Activated naive CD4-positive, alpha-beta T cell treated with anti-CD3 and anti-CD28 coated beads for 36 hours (primary cell): ENCODE measurements at regions of chr12 and their contacts with region 1.

Region 1: DNA sequence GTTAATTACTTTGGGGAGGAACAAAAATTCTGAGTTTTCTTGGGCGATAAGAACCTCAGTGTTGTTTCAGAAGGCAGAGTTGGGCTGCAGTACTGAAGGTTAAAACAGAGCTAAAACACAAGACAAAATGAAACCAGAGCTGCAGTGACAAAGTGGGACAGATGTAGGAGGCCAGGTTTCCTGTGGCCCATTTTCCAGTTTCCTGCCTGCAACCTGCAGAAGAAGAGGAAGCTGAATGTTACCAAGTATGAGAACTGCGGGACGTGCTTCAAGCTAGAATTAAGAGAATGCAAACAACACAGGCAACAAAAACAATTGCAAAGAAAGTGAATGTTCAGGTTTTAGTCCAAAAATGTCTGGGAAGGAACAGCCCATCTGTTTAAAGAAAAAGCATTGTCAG is 17.8 kb downstream of the ELK3 start:
- DNase-seq: peak; percentile 33
- H3K4me3 Mint-ChIP-seq: peak overlapping the region; percentile 61
- H3K27ac Mint-ChIP-seq: peak overlapping the region; percentile 84
- H3K4me1 Mint-ChIP-seq: peaks cover 85% of the 10 kb centered on the region
- H3K27me3 Mint-ChIP-seq: no peaks in the 10 kb centered on the region

Region 2: DNA sequence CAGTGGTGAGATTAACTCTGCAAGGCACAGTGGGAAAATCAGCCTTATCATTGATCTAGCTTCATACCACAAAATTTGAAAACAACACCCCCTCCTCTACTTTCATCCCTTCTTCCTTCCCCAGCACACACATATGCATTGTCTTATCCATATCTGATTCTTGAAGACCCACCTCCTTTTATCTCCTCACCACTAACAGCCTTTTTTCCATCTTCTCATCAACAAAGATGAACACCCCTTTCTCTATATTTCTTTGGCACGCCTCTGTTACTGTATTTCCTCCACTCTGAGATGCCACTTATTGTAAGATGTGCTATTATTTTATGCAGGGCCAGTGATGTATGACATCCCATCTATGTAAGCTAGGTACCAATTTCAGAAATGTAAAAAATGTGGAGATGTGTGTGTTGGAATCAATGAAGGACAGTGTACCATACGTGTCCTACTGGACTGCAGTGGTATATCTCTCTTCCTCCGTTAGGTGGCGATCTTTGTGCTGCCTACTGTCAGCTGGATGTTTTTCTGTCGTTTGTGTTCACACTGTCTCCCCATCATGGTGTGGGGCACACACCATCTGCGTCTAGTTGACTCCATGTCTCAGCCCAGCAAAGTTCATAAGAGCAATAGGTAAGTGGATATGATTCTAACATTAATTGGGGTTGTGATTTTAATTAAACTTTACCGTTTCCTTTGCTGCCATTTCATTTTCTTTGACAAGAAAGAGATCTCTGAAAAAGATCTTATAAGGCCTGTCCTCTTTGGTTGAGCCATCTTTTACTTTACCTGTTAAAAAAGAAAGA is 293.6 kb before region 1 on chr12:
- CTCF ChIA-PET with region 1: interaction called, 3 read pairs
- intact Hi-C with region 1: loop called (anchors 2 kb)
- DNase-seq: peak; percentile 65
- H3K4me3 Mint-ChIP-seq: no peak overlapping the region
- H3K27ac Mint-ChIP-seq: no peak overlapping the region
- H3K4me1 Mint-ChIP-seq: no peaks in the 10 kb centered on the region
- H3K27me3 Mint-ChIP-seq: peaks cover 2% of the 10 kb centered on the region

Region 3: GRCh38 chr12:95998611-95999286 is 213.2 kb before region 1 on chr12:
- CTCF ChIA-PET with region 1: no interaction called
- intact Hi-C with region 1: loop called (anchors 1 kb)
- DNase-seq: peak; percentile 71
- H3K4me3 Mint-ChIP-seq: no peak overlapping the region
- H3K27ac Mint-ChIP-seq: no peak overlapping the region
- H3K4me1 Mint-ChIP-seq: peaks cover 3% of the 10 kb centered on the region
- H3K27me3 Mint-ChIP-seq: no peaks in the 10 kb centered on the region

Region 4: GRCh38 chr12:96061864-96062453 is 150.0 kb before region 1 on chr12:
- CTCF ChIA-PET with region 1: interaction called, 79 read pairs
- intact Hi-C with region 1: loop called (anchors 1 kb)
- DNase-seq: peak; percentile 90
- H3K4me3 Mint-ChIP-seq: no peak overlapping the region
- H3K27ac Mint-ChIP-seq: no peak overlapping the region
- H3K4me1 Mint-ChIP-seq: peaks cover 25% of the 10 kb centered on the region
- H3K27me3 Mint-ChIP-seq: no peaks in the 10 kb centered on the region

Region 5: GRCh38 chr12:96177013-96177412 is 35.0 kb before region 1 on chr12:
- CTCF ChIA-PET with region 1: interaction called, 21 read pairs
- intact Hi-C with region 1: loop called (anchors 1 kb)
- DNase-seq: peak; percentile 91
- H3K4me3 Mint-ChIP-seq: no peak overlapping the region
- H3K27ac Mint-ChIP-seq: peak overlapping the region; percentile 82
- H3K4me1 Mint-ChIP-seq: peaks cover 17% of the 10 kb centered on the region
- H3K27me3 Mint-ChIP-seq: no peaks in the 10 kb centered on the region

Region 6: DNA sequence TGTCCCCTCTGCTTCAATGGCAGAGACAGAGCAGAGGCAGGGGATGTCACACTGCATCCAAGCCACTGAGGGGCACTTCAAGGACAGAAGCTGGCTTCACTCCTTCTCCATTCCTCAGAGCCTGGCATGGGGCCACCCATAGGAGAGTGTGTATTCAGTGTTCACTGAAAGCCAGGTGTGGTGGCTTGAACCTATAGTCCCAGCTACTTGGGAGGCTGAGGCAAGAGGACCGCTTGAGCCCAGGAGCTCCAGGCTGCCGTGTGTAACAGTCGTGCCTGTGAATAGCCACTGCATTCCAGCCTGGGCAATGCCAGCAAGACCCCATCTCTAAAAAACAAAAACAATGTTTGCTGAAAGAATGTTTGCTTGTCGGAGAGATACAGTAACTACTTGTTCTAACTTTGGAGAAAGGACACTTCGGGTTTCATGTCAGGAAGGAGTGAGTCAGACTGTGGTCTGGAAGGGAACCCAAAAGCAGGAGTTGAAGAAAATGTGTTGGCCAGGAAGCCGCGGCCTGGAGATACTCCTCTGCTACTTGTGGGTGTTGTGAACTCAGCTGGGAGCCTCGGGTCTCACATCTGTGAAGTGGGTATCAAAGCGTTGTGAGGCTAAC is 25.6 kb after region 1 on chr12:
- CTCF ChIA-PET with region 1: interaction called, 11 read pairs
- intact Hi-C with region 1: no loop called
- DNase-seq: peak; percentile 75
- H3K4me3 Mint-ChIP-seq: no peak overlapping the region
- H3K27ac Mint-ChIP-seq: peak overlapping the region; percentile 47
- H3K4me1 Mint-ChIP-seq: peaks cover 66% of the 10 kb centered on the region
- H3K27me3 Mint-ChIP-seq: no peaks in the 10 kb centered on the region

Region 7: DNA sequence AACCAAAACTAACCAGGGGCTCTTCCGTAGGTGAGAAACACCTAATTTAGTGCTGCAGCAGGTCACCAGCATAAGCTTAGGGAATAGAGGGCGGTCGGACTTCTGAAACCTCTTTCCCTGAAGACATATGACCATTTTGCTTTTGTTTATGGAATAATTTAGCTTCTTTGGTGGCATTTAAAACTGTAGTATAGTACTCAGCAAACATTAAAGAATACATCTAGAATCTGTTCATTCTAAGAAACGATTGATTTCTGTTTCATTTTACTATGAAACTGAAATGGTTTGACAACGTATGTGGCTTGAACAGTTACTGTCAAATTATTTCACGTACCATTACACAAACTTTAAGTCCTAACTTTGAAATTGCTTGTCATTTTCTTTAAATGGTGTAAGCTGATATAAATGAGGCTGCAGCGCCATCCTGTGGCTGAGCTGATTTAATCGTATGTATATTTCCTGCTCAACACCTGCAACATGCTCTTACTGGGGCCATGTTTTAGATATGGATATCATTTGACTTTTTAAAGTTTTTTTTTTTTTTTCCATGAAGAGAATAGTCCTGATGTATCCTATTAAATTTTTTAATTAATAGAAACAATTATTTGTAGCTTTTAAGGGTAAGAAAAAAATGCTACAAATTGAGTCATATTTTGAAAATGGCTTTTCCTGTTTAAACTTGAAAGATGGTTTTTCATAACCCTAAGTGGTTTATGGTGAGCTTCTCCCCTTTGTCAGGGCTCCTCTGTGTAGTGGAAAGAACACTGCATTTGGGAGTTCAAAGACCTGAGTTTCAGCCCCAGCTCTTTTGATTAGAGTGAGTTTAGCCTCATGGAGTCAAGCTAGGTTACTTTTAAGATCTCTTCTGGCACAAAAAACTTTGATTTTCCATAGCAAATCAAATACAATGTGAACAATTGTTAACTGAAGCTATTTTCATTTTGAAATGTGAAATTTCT is 304.8 kb after region 1 on chr12:
- CTCF ChIA-PET with region 1: interaction called, 44 read pairs
- intact Hi-C with region 1: loop called (anchors 1 kb)
- DNase-seq: peak; percentile 96
- H3K4me3 Mint-ChIP-seq: peak overlapping the region; percentile 2
- H3K27ac Mint-ChIP-seq: peak overlapping the region; percentile 25
- H3K4me1 Mint-ChIP-seq: peaks cover 16% of the 10 kb centered on the region
- H3K27me3 Mint-ChIP-seq: no peaks in the 10 kb centered on the region